Heart left ventricle (tissue), 16 donors: ENCODE measurements at regions of chr4 and their contacts with region 1.

Region 1: DNA sequence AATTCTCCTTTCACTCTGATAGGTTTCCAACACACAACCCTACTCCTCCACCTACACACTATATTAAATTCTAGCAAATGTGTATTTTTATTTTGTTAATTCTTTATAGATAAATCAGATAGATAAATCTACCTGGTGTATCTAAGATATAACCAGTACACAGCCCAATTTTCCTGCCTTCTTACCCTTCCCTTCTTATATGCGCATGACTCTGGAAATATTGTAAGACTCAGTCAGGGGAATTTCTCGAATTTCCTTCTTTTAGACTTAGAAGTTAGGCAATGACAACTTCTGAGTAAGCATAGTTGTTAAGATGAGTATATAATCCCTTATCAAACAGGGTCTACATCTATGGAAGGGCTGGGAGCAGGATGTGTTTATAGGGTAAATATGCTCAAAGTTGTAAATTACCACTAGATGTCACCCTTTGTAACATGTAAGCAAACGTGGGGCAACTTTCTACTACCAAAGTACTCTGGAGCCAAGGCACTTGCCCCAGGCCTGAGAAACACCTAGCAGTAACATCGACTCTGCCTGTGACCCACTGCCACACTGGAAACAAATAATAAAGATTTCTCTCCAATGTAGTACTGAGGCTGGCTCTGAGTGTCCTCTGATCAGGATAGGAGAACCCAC is 444.7 kb downstream of the IQCM start:
- DNase-seq: peak in 1 of 5 donors; percentile 42
- ATAC-seq: peak; percentile 58 to 74 (median 69)
- H3K4me3 ChIP-seq: no peak overlapping the region
- H3K27ac ChIP-seq: no peak overlapping the region
- H3K4me1 ChIP-seq: peaks cover 0 to 7% (median 0%) of the 10 kb centered on the region in 12 donors
- H3K27me3 ChIP-seq: no peaks in the 10 kb centered on the region
- CTCF ChIP-seq: peak; percentile 14 to 57 (median 42)
- POLR2A ChIP-seq: no peak

Region 2: DNA sequence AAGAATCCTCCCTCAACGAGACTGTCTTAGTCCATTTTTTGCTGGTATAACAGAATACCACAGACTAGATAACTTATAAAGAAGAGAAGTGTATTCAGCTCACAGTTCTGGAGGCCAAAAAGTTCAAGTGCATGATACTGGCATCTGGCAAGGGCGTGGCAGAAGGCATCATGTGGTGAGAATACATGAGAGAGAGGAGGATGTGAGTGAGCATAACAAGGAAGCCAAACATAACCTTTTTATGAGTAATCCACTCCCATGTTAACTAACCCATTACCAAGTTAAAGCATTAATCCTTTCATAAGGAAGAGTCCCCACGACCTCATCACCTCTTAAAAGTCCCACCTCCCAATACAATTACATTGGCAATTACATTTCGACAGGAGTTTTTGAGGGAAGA is 59.8 kb before region 1 on chr4:
- intact Hi-C with region 1: no loop called
- DNase-seq: no peak
- ATAC-seq: no peak
- H3K4me3 ChIP-seq: no peak overlapping the region
- H3K27ac ChIP-seq: no peak overlapping the region
- H3K4me1 ChIP-seq: no peaks in the 10 kb centered on the region
- H3K27me3 ChIP-seq: no peaks in the 10 kb centered on the region
- CTCF ChIP-seq: no peak
- POLR2A ChIP-seq: no peak

Region 3: GRCh38 chr4:149549911-149550310 is 179.0 kb after region 1 on chr4:
- intact Hi-C with region 1: loop called in 8 of 10 experiments (anchors 1 to 10 kb)
- DNase-seq: peak in 3 of 5 donors; percentile 6 to 23 (median 16)
- ATAC-seq: peak in 3 of 4 donors; percentile 60 to 70 (median 69)
- H3K4me3 ChIP-seq: no peak overlapping the region
- H3K27ac ChIP-seq: no peak overlapping the region
- H3K4me1 ChIP-seq: no peaks in the 10 kb centered on the region
- H3K27me3 ChIP-seq: no peaks in the 10 kb centered on the region
- CTCF ChIP-seq: peak in 9 of 12 donors; percentile 12 to 59 (median 40)
- POLR2A ChIP-seq: no peak